T-cell (primary cell): ENCODE measurements at regions of chr2 and their contacts with region 1.

Region 1: DNA sequence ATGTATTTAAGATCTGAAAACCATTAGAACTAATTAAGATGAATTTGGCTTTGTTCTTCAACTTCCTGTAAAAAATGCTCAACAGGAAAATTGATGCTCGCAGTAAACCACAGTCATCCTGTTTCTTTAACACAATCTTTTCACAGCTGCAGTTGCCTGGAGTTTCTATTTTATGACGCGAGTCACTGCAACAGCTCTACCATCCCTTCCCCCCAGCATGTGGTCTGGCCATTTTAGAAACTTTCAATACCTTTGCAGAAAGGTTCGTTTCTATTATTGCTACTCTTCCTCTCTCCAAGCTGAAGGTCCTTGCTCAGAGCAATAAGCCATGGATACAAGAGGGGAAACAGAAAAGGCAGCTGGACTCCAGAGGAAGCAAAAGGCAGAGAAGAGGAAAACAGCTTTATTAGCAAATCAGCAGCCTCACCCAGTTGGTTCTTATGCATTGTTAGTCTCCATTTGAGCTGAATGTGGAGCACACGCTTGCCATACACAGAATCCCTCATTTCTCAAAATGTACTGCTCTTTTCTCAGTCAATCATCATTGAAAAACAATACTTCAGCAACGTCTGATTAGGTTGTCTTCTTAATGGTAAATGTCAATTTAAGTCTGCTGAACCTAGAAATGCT is 3.9 kb downstream of the WIPF1 start:
- DNase-seq: peak; percentile 33 to 91 (median 74)
- ATAC-seq: peak; percentile 79 to 86 (median 82)
- H3K4me3 ChIP-seq: peak overlapping the region; percentile 35 to 58
- H3K4me3 Mint-ChIP-seq: peak overlapping the region; percentile 88 to 99 (median 95)
- H3K27ac ChIP-seq: peak overlapping the region; percentile 89
- H3K27ac Mint-ChIP-seq: peak overlapping the region; percentile 98 to 99
- H3K4me1 ChIP-seq: peaks cover 44 to 56% of the 10 kb centered on the region in 2 experiments
- H3K4me1 Mint-ChIP-seq: peaks cover 52 to 82% (median 63%) of the 10 kb centered on the region in 3 donors
- H3K27me3 ChIP-seq: no peaks in the 10 kb centered on the region
- H3K27me3 Mint-ChIP-seq: no peaks in the 10 kb centered on the region

Region 2: GRCh38 chr2:174536304-174536703 is 57.4 kb before region 1 on chr2:
- CTCF ChIA-PET with region 1: no interaction called
- POLR2A ChIA-PET with region 1: interaction called in 1 of 2 experiments, 11 read pairs
- DNase-seq: no peak
- ATAC-seq: no peak
- H3K4me3 ChIP-seq: no peak overlapping the region
- H3K4me3 Mint-ChIP-seq: no peak overlapping the region
- H3K27ac ChIP-seq: no peak overlapping the region
- H3K27ac Mint-ChIP-seq: no peak overlapping the region
- H3K4me1 ChIP-seq: no peaks in the 10 kb centered on the region
- H3K4me1 Mint-ChIP-seq: peaks cover 1 to 6% (median 6%) of the 10 kb centered on the region in 3 donors
- H3K27me3 ChIP-seq: peaks cover 0 to 15% of the 10 kb centered on the region in 2 experiments
- H3K27me3 Mint-ChIP-seq: peaks cover 0 to 5% of the 10 kb centered on the region in 2 donors

Region 3: GRCh38 chr2:174610243-174610995 is 16.7 kb after region 1 on chr2:
- CTCF ChIA-PET with region 1: interaction called, 6 to 14 read pairs
- POLR2A ChIA-PET with region 1: interaction called, 6 to 12 read pairs
- DNase-seq: no peak
- ATAC-seq: no peak
- H3K4me3 ChIP-seq: no peak overlapping the region
- H3K4me3 Mint-ChIP-seq: peak overlapping the region in 1 of 3 donors; percentile 63
- H3K27ac ChIP-seq: peak overlapping the region; percentile 72
- H3K27ac Mint-ChIP-seq: peak overlapping the region; percentile 92 to 95
- H3K4me1 ChIP-seq: peaks cover 26 to 48% of the 10 kb centered on the region in 2 experiments
- H3K4me1 Mint-ChIP-seq: peaks cover 92 to 93% (median 92%) of the 10 kb centered on the region in 3 donors
- H3K27me3 ChIP-seq: no peaks in the 10 kb centered on the region
- H3K27me3 Mint-ChIP-seq: no peaks in the 10 kb centered on the region

Region 4: DNA sequence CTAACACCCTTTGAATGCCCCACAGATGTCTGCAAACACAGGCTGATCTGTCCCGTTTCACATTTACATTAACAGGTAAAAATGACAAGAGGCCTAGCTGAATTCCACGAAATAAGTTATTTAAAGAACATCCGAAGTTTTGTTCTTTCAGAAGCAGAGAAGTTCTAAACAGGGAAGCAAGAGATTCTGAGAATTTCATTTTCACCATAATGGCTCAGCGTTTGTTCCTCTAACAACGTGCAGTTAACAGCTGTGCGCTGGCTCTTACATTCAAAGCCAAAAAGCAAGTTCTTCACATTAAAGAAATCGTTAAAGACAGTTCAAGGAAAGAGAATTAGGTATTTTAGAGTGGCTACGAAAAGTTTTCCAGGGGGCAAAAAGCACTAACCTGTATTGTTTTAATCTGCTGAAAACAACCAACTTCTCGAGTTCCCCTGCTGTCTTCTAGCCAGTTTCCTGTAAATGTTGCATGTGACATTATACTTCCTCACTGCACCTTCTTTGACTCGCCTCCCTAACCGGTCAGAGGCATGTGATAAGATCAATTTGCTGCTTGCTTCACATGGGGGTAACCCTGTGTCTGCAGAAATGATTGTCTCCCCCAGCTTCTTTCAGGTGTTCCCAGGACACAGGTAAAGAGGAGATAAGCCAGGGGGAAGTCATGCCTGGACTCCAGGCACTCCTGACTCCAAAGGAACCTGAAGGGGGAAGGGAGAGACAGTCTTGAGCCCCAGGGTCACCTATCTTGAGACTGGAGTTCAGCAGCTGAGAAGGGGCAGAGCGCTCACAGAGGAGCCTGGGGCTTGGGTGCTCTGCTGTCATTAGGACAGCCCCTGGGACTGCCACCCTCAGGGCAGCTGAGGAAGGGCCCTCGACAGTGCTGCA is 40.7 kb after region 1 on chr2:
- CTCF ChIA-PET with region 1: interaction called, 3 to 8 read pairs
- POLR2A ChIA-PET with region 1: interaction called, 4 to 17 read pairs
- DNase-seq: peak in 33 of 35 experiments; percentile 12 to 75 (median 34)
- ATAC-seq: peak; percentile 73 to 83 (median 77)
- H3K4me3 ChIP-seq: peak overlapping the region; percentile 66 to 81
- H3K4me3 Mint-ChIP-seq: peak overlapping the region; percentile 87 to 93 (median 89)
- H3K27ac ChIP-seq: peak overlapping the region; percentile 94
- H3K27ac Mint-ChIP-seq: peak overlapping the region; percentile 93 to 99
- H3K4me1 ChIP-seq: peaks cover 30 to 46% of the 10 kb centered on the region in 2 experiments
- H3K4me1 Mint-ChIP-seq: peaks cover 60 to 83% (median 75%) of the 10 kb centered on the region in 3 donors
- H3K27me3 ChIP-seq: no peaks in the 10 kb centered on the region
- H3K27me3 Mint-ChIP-seq: no peaks in the 10 kb centered on the region

Region 5: DNA sequence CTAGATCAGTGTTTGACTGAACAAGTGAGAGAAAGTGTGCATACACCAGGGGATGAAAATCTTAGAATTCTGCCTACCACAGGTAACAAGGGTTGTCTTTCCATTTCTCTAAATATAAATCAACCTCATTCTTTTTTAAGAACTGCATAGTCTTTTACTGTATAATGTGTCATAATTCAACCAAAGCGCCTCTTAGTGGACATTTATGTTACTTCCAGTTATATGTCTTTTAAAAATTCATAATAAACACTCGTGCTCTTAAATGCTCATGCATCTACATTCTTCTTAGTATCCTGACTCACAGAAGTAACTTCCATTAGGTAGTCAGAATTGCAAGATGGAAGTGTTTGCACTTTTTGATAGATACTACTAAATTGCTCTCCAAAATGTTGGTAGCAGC is 94.4 kb after region 1 on chr2:
- CTCF ChIA-PET with region 1: interaction called, 8 to 12 read pairs
- POLR2A ChIA-PET with region 1: interaction called in 1 of 2 experiments, 4 read pairs
- DNase-seq: peak in 1 of 35 experiments; percentile 68
- ATAC-seq: peak; percentile 50 to 62 (median 60)
- H3K4me3 ChIP-seq: no peak overlapping the region
- H3K4me3 Mint-ChIP-seq: no peak overlapping the region
- H3K27ac ChIP-seq: no peak overlapping the region
- H3K27ac Mint-ChIP-seq: peak overlapping the region; percentile 56 to 73
- H3K4me1 ChIP-seq: peaks cover 0 to 5% of the 10 kb centered on the region in 2 experiments
- H3K4me1 Mint-ChIP-seq: peaks cover 24 to 29% (median 26%) of the 10 kb centered on the region in 3 donors
- H3K27me3 ChIP-seq: peaks cover 0 to 8% of the 10 kb centered on the region in 2 experiments
- H3K27me3 Mint-ChIP-seq: no peaks in the 10 kb centered on the region